Head of caudate nucleus (tissue), 42 donors: ENCODE measurements at regions of chr12 and their contacts with region 1.

Region 1: GRCh38 chr12:64696080-64696741 is 63.0 kb downstream of the GNS start:
- DNase-seq: peak in 1 of 42 donors; percentile 8

Region 2: DNA sequence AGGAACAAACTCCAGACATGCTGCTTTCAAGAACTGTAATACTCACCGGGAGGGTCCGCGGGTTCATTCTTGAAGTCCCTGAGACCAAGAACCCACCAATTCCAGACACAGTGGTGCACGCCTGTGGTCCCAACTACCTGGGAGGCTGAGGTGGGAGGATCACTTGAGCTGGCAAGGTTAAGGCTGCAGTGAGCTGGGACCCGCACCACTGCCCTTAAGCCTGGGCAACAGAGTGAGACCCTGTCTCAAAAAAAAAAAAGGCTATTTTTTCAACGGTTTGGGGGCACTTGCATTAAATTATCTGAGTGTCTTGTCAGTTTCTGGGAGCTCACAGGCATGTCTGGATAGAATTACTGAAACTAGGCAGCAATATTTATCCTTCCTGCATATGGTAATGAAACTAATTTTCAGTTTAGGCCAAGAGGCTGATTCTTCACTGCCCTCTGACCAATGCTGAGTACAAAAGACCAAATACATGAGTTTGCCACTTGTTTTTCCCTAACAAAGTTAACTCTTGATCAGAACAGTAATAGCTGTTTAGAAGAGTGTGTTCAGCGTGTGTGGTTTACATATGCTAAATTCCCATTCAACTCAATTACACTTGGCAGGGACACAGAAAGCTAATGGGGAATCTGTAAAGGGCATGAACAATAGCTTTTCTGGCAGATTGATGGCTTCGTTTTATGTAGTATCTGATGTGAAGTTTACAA is 151.7 kb before region 1 on chr12:
- intact Hi-C with region 1: loop called (anchors 5 kb)
- DNase-seq: peak in 1 of 42 donors; percentile 29

Region 3: GRCh38 chr12:64796208-64796845 is 100.1 kb after region 1 on chr12:
- intact Hi-C with region 1: no loop called
- DNase-seq: peak in 31 of 42 donors; percentile 8 to 86 (median 62)